Heart right ventricle (tissue), 16 donors: ENCODE measurements at regions of chr13 and their contacts with region 1.

Region 1: GRCh38 chr13:43786773-43787517 is at the start of gene ENOX1:
- DNase-seq: peak; percentile 67 to 78
- ATAC-seq: peak; percentile 79 to 93 (median 84)
- H3K4me3 ChIP-seq: peak within 1 kb of the TSS; percentile 50 to 89 (median 70)
- H3K27ac ChIP-seq: peak within 1 kb of the TSS; percentile 54 to 90 (median 84)
- H3K4me1 ChIP-seq: peaks cover 0 to 50% (median 32%) of the 10 kb centered on the region in 9 donors
- H3K27me3 ChIP-seq: peaks cover 0 to 50% (median 28%) of the 10 kb centered on the region in 7 donors
- CTCF ChIP-seq: peak in 8 of 9 donors; percentile 18 to 52 (median 30)
- total RNA-seq, gene ENOX1: 3.1 to 10.4 (median 7.7) TPM

Region 2: GRCh38 chr13:43196086-43196621 is 590.8 kb before region 1 on chr13:
- intact Hi-C with region 1: loop called in 1 of 10 experiments (anchors 5 kb)
- DNase-seq: peak; percentile 16 to 47
- ATAC-seq: peak; percentile 57 to 91 (median 80)
- H3K4me3 ChIP-seq: peak overlapping the region in 1 of 10 donors; percentile 21
- H3K27ac ChIP-seq: peak overlapping the region in 1 of 10 donors; percentile 67
- H3K4me1 ChIP-seq: peaks cover 0 to 16% (median 10%) of the 10 kb centered on the region in 9 donors
- H3K27me3 ChIP-seq: no peaks in the 10 kb centered on the region
- CTCF ChIP-seq: peak in 6 of 9 donors; percentile 14 to 58 (median 42)

Region 3: DNA sequence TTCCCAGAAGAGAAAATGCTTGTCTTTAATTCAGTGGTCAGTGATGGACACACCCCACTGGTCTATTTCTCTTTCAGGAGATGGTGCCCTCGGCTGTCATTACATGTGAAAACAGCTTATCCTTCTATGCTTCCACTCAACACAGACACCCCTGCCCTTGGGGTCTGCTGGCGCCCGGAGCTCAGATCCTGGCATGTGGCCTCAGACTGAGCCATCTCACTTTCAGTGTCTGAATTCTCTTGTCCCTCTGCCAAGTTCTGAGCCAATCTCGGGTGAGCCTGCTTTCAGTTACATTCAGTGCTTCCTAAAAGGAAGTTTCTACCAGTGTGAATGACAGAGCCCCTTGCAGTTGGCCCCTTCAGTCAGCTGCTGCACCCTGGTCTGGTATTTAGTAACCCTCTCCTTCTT is 470.0 kb before region 1 on chr13:
- intact Hi-C with region 1: loop called in 1 of 10 experiments (anchors 5 kb)
- DNase-seq: peak in 1 of 2 donors; percentile 8
- ATAC-seq: peak in 7 of 8 donors; percentile 23 to 76 (median 69)
- H3K4me3 ChIP-seq: peak overlapping the region in 2 of 10 donors; percentile 2 to 8
- H3K27ac ChIP-seq: peak overlapping the region in 1 of 10 donors; percentile 4
- H3K4me1 ChIP-seq: peaks cover 0 to 13% (median 8%) of the 10 kb centered on the region in 9 donors
- H3K27me3 ChIP-seq: no peaks in the 10 kb centered on the region
- CTCF ChIP-seq: no peak

Region 4: GRCh38 chr13:43546251-43546650 is 240.7 kb before region 1 on chr13:
- intact Hi-C with region 1: loop called in 1 of 10 experiments (anchors 10 kb)
- DNase-seq: peak; percentile 46 to 65
- ATAC-seq: peak; percentile 58 to 89 (median 64)
- H3K4me3 ChIP-seq: no peak overlapping the region
- H3K27ac ChIP-seq: no peak overlapping the region
- H3K4me1 ChIP-seq: peaks cover 0 to 40% (median 31%) of the 10 kb centered on the region in 9 donors
- H3K27me3 ChIP-seq: no peaks in the 10 kb centered on the region
- CTCF ChIP-seq: no peak

Region 5: DNA sequence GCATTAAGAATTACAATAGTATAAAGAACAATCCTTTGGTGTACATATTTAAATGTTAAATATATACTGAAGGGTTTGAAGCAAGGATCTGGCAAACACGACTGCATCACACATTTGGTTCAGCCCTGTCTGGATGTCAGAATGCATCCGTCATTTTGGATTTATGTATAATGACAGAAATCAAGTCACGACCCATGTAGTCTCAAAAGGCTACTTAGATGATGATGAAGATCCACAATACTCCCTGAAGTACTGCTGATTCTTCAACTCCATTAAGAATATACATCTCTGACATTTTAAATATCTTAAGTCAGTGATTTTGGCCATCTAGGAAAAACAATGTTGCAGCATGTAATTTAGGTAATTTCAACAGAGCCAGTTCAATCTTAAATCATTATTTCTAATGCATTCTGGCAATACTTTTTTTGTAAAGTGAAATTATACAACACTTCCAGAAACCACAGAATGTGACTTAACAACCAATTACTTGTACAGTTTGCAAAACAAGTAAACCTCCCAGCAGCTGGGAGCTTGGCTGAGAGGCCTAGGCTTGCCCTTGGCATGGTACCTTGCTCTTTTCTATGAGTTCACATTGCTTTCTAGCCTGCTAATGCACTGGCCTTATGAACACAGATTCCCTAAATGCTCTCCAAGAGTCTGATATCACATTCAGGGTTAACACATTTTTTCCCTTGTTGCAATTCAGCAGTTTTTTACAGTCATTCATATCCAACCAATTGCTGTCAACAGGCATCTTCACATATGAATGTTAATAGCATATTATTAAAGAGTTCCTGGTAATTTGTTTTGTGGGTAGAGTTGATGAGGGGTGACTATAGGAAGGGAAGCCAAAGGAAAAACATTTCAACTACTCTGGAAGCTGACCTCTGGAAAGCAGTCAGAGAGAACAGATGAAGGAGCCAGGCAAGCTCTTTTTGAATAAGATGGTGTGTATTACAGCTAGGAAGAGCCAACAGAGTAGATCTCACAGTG is 175.4 kb before region 1 on chr13:
- intact Hi-C with region 1: loop called in 1 of 10 experiments (anchors 5 kb)
- DNase-seq: no peak
- ATAC-seq: peak in 3 of 8 donors; percentile 7 to 39 (median 33)
- H3K4me3 ChIP-seq: no peak overlapping the region
- H3K27ac ChIP-seq: peak overlapping the region in 3 of 10 donors; percentile 15 to 40 (median 22)
- H3K4me1 ChIP-seq: peaks cover 0 to 35% (median 19%) of the 10 kb centered on the region in 9 donors
- H3K27me3 ChIP-seq: no peaks in the 10 kb centered on the region
- CTCF ChIP-seq: no peak

Region 6: GRCh38 chr13:43720780-43721397 is 66.1 kb before region 1 on chr13:
- intact Hi-C with region 1: no loop called
- DNase-seq: no peak
- ATAC-seq: no peak
- H3K4me3 ChIP-seq: no peak overlapping the region
- H3K27ac ChIP-seq: no peak overlapping the region
- H3K4me1 ChIP-seq: peaks cover 0 to 3% (median 0%) of the 10 kb centered on the region in 9 donors
- H3K27me3 ChIP-seq: no peaks in the 10 kb centered on the region
- CTCF ChIP-seq: no peak

Region 7: GRCh38 chr13:44274452-44275205 is 487.7 kb after region 1 on chr13:
- intact Hi-C with region 1: no loop called
- DNase-seq: no peak
- ATAC-seq: peak in 7 of 8 donors; percentile 62 to 87 (median 79)
- H3K4me3 ChIP-seq: peak overlapping the region in 5 of 10 donors; percentile 0 to 21 (median 9)
- H3K27ac ChIP-seq: peak overlapping the region; percentile 36 to 86 (median 77)
- H3K4me1 ChIP-seq: peaks cover 8 to 67% (median 56%) of the 10 kb centered on the region in 9 donors
- H3K27me3 ChIP-seq: no peaks in the 10 kb centered on the region
- CTCF ChIP-seq: no peak